CD4-positive, alpha-beta memory T cell (primary cell): ENCODE measurements at regions of chr4 and their contacts with region 1.

Region 1: GRCh38 chr4:152735396-152735859 is 44.1 kb downstream of the TIGD4 start:
- DNase-seq: peak in 4 of 5 donors; percentile 36 to 39 (median 38)
- H3K4me3 ChIP-seq: no peak overlapping the region
- H3K4me3 Mint-ChIP-seq: no peak overlapping the region
- H3K27ac ChIP-seq: no peak overlapping the region
- H3K27ac Mint-ChIP-seq: peak overlapping the region in 1 of 7 donors; percentile 0
- H3K4me1 ChIP-seq: no peaks in the 10 kb centered on the region
- H3K4me1 Mint-ChIP-seq: peaks cover 0 to 3% (median 0%) of the 10 kb centered on the region in 4 donors
- H3K27me3 ChIP-seq: no peaks in the 10 kb centered on the region
- H3K27me3 Mint-ChIP-seq: peaks cover 2 to 3% of the 10 kb centered on the region in 2 donors

Region 2: DNA sequence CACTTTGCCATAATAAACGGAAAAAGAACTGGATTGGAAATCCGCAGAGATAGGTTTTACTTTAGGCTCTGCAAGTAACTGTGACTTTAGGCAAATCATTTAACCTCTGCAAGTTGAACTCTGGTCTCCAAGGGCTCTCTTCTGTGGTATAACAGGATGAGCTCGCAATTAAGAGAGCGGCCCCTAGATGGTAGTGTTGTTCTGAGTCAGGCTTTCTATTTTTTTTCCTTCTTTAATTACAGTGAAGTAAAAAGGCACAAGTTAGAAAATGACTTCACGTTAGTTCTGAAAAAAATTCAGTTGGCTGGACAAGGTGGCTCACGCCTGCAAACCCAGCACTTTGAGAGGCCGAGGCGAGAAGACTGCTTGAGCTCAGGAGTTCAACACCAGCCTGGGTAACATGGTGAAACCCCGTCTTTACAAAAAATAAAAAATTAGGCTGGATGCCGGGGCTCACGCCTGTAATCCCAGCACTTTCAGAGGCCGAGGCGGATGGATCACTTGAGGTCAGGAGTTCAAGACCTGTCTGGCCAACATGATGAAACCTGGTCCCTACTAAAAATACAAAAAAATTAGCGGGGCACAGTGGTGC is 1618.0 kb before region 1 on chr4:
- CTCF ChIA-PET with region 1: no interaction called
- POLR2A ChIA-PET with region 1: no interaction called
- intact Hi-C with region 1: loop called (anchors 1 kb)
- DNase-seq: peak; percentile 37 to 49 (median 45)
- H3K4me3 ChIP-seq: no peak overlapping the region
- H3K4me3 Mint-ChIP-seq: no peak overlapping the region
- H3K27ac ChIP-seq: no peak overlapping the region
- H3K27ac Mint-ChIP-seq: no peak overlapping the region
- H3K4me1 ChIP-seq: no peaks in the 10 kb centered on the region
- H3K4me1 Mint-ChIP-seq: peaks cover 0 to 4% (median 2%) of the 10 kb centered on the region in 4 donors
- H3K27me3 ChIP-seq: no peaks in the 10 kb centered on the region
- H3K27me3 Mint-ChIP-seq: no peaks in the 10 kb centered on the region

Region 3: GRCh38 chr4:152408514-152409327 is 326.7 kb before region 1 on chr4:
- CTCF ChIA-PET with region 1: interaction called, 17 read pairs
- POLR2A ChIA-PET with region 1: no interaction called
- intact Hi-C with region 1: loop called (anchors 1 kb)
- DNase-seq: peak; percentile 28 to 44 (median 41)
- H3K4me3 ChIP-seq: no peak overlapping the region
- H3K4me3 Mint-ChIP-seq: no peak overlapping the region
- H3K27ac ChIP-seq: no peak overlapping the region
- H3K27ac Mint-ChIP-seq: peak overlapping the region in 5 of 7 donors; percentile 3 to 85 (median 23)
- H3K4me1 ChIP-seq: no peaks in the 10 kb centered on the region
- H3K4me1 Mint-ChIP-seq: peaks cover 18 to 23% (median 20%) of the 10 kb centered on the region in 4 donors
- H3K27me3 ChIP-seq: no peaks in the 10 kb centered on the region
- H3K27me3 Mint-ChIP-seq: no peaks in the 10 kb centered on the region

Region 4: DNA sequence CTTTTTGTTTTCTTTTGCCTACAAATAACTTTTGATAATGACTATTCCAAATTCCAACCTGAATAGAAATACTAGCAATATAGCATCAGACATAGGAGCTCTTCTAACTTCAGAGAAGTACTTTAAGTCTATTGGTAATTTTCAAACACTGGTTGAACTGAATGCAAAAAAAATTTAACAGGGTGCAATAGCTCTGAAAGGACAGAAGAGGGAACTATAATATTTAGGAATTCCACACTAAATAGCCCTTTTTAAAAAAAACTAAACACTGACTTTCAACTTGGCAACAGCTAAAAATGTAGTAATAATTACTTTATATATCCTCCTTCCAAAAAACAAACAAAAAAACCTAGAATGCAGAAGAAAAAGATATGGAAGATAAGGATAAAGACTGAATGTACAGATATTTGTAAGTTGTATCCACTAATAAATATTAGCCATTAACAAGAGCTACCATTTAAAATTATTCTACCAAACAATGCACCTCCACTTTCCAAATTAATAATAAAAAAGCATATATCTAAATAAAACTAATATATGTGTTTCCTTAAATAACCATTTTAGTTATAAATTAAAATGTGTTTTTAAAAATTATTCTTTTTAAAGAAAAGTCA is 280.9 kb before region 1 on chr4:
- CTCF ChIA-PET with region 1: interaction called, 3 read pairs
- POLR2A ChIA-PET with region 1: no interaction called
- intact Hi-C with region 1: loop called (anchors 1 kb)
- DNase-seq: peak in 3 of 5 donors; percentile 12
- H3K4me3 ChIP-seq: no peak overlapping the region
- H3K4me3 Mint-ChIP-seq: no peak overlapping the region
- H3K27ac ChIP-seq: no peak overlapping the region
- H3K27ac Mint-ChIP-seq: peak overlapping the region in 2 of 7 donors; percentile 31 to 73
- H3K4me1 ChIP-seq: peaks cover 23% of the 10 kb centered on the region
- H3K4me1 Mint-ChIP-seq: peaks cover 28 to 42% (median 36%) of the 10 kb centered on the region in 4 donors
- H3K27me3 ChIP-seq: no peaks in the 10 kb centered on the region
- H3K27me3 Mint-ChIP-seq: no peaks in the 10 kb centered on the region

Region 5: GRCh38 chr4:152679414-152680281 is 55.8 kb before region 1 on chr4 and contains the start of gene TMEM154:
- CTCF ChIA-PET with region 1: interaction called, 12 read pairs
- POLR2A ChIA-PET with region 1: interaction called, 3 read pairs
- intact Hi-C with region 1: no loop called
- DNase-seq: peak; percentile 78 to 82 (median 81)
- H3K4me3 ChIP-seq: peak within 1 kb of the TSS; percentile 30 to 62
- H3K4me3 Mint-ChIP-seq: peak within 1 kb of the TSS; percentile 91 to 97 (median 96)
- H3K27ac ChIP-seq: peak within 1 kb of the TSS; percentile 69
- H3K27ac Mint-ChIP-seq: peak within 1 kb of the TSS; percentile 90 to 98 (median 96)
- H3K4me1 ChIP-seq: peaks cover 47% of the 10 kb centered on the region
- H3K4me1 Mint-ChIP-seq: peaks cover 36 to 55% (median 47%) of the 10 kb centered on the region in 4 donors
- H3K27me3 ChIP-seq: no peaks in the 10 kb centered on the region
- H3K27me3 Mint-ChIP-seq: no peaks in the 10 kb centered on the region
- total RNA-seq, gene TMEM154: 35.2 to 38.6 TPM